G401 (cell line): ENCODE measurements at regions of chr6 and their contacts with region 1.

Region 1: DNA sequence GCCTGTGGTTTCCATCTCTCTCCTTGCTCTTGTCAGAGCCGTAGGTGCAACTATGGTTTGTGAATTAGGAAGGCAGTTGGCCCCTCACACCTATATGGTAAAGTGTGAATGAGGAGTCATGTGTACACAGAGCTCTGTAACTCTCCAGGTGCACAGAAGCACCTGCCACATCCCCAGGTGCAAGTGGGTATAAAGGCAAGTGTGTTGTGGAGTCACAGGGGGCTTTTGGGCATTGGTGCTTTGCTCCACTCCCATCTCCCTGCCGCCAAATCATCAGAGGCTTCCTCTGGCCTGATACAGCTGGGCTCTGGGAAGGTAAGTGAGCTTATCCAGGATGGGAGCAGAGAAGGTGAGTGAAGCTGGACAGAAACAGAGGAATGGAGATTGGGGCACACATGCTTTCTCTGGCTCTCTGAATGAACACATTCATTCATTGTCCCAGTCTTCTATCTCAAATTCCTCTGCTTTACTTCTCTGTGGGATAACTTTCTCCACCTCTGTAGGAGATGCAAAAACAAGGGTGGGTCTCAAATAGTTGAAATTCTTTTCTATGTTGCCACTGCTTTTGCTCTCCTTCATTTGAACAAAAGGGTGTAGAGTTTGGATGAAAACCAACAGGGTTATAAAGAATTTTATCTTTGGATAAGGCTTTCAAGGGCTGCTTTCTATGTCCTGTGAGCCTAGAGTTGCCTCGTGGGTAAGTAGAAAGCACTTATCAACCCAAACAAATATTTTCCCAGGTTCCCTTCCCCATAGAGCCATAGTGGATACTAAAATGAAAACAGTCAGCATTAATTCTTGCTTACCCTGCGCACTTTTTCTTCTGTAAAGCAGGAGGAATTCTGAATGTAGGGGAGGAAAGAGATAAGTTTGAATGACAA is 45.0 kb upstream of the RIPOR2 start:
- DNase-seq: no peak

Region 2: GRCh38 chr6:25035527-25036435 is 55.0 kb after region 1 on chr6:
- in situ Hi-C with region 1: loop called (anchors 5 kb)
- DNase-seq: no peak

Region 3: DNA sequence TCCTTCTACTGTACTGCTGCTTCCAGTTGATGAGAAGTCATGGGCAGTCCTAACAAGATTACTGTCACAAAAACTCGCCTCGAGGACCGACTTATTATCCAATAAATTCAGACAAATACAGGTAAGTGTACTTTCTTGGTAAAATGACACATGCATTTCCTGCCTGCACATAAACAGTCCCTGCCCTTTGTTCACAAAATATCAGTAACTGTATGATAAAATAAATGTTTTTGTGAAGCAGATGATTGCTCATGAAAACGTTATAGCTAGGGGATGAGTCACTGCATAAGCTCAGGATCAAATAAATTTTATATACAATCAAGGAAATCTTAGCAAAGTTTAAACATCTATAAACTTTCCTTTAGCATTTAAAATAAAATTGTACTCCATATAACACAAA is 119.5 kb after region 1 on chr6:
- in situ Hi-C with region 1: no loop called
- DNase-seq: no peak